ENCODE measurements at regions of chr20 and their contacts with region 1.

Region 1: GRCh38 chr20:39112178-39112743 is 150.1 kb downstream of the DHX35 start:
- DNase-seq: no peak
- ATAC-seq: peak; percentile 94
- H3K4me3 ChIP-seq: no peak overlapping the region
- H3K27ac ChIP-seq: no peak overlapping the region
- H3K4me1 ChIP-seq: peaks cover 5% of the 10 kb centered on the region; the same call in 1 of the 2 replicates
- H3K27me3 ChIP-seq: no peaks in the 10 kb centered on the region; a peak in 1 of 4 replicates
- CTCF ChIP-seq: peak; percentile 54 to 62 (median 57); a peak in 5 of 6 replicates
- EP300 ChIP-seq: no peak
- POLR2A ChIP-seq: no peak
- RAD21 ChIP-seq: peak; percentile 68

Region 2: DNA sequence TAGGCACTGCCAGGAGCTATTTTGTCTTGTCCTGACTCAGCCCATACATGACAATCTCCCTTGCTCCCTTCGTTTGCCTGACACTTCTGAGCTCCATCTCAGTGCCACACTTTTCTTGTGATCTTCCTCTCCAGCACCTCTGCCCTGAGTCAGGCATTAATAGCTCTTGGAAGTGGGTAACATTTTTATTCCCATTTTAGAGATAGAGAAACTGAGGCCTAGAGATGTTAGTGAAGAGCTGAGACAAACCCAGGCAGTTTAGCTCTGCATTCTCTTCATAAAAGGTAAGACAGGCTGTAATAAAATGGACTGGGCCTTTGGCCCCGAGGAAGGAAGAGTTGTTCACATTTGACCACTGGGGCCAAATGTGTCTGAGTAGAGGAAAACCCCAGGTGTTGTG is 17.3 kb after region 1 on chr20:
- CTCF ChIA-PET with region 1: no interaction called
- POLR2A ChIA-PET with region 1: no interaction called
- RAD21 ChIA-PET with region 1: no interaction called
- SMC1A ChIA-PET with region 1: no interaction called
- in situ Hi-C with region 1: no loop called
- intact Hi-C with region 1: no loop called
- DNase-seq: no peak
- ATAC-seq: no peak
- H3K4me3 ChIP-seq: no peak overlapping the region
- H3K27ac ChIP-seq: no peak overlapping the region
- H3K4me1 ChIP-seq: no peaks in the 10 kb centered on the region
- H3K27me3 ChIP-seq: no peaks in the 10 kb centered on the region
- CTCF ChIP-seq: no peak
- EP300 ChIP-seq: no peak
- POLR2A ChIP-seq: no peak
- RAD21 ChIP-seq: no peak

Region 3: GRCh38 chr20:39264506-39265172 is 152.4 kb after region 1 on chr20:
- CTCF ChIA-PET with region 1: no interaction called
- POLR2A ChIA-PET with region 1: no interaction called
- RAD21 ChIA-PET with region 1: no interaction called
- SMC1A ChIA-PET with region 1: no interaction called
- in situ Hi-C with region 1: no loop called
- intact Hi-C with region 1: loop called (anchors 1 kb)
- DNase-seq: no peak
- ATAC-seq: peak; percentile 80
- H3K4me3 ChIP-seq: no peak overlapping the region
- H3K27ac ChIP-seq: no peak overlapping the region
- H3K4me1 ChIP-seq: no peaks in the 10 kb centered on the region
- H3K27me3 ChIP-seq: no peaks in the 10 kb centered on the region
- CTCF ChIP-seq: peak; percentile 72 to 88 (median 88)
- EP300 ChIP-seq: no peak
- POLR2A ChIP-seq: no peak
- RAD21 ChIP-seq: peak; percentile 54

Measured in GM12878 (cell line).